HEK293T (cell line): ENCODE measurements at regions of chr16 and their contacts with region 1.

Region 1: GRCh38 chr16:8667492-8667891 is 6.9 kb upstream of the ABAT start:
- DNase-seq: no peak

Region 2: DNA sequence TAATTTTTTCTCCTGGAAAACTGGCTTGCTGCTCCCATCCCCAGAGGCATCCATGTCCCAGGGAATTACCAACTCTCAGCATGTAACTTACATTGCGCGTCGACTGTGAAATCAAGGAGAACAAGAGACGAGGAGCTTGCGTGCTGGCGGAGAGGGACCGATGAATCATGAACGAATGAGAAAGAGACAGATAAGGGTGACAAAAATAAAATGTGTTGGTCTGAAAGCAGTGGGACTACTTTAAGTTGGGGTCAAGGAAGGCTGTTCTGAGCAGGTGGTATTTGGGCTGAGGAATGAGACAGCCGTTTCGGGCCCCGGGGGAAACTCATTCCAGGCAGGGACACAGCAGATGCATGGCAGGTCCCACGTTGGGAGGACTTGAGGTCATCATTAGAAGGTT is 29.4 kb after region 1 on chr16:
- CTCF ChIA-PET with region 1: interaction called, 11 read pairs
- POLR2A ChIA-PET with region 1: no interaction called
- DNase-seq: no peak